ENCODE measurements at regions of chr13 and their contacts with region 1.

Region 1: DNA sequence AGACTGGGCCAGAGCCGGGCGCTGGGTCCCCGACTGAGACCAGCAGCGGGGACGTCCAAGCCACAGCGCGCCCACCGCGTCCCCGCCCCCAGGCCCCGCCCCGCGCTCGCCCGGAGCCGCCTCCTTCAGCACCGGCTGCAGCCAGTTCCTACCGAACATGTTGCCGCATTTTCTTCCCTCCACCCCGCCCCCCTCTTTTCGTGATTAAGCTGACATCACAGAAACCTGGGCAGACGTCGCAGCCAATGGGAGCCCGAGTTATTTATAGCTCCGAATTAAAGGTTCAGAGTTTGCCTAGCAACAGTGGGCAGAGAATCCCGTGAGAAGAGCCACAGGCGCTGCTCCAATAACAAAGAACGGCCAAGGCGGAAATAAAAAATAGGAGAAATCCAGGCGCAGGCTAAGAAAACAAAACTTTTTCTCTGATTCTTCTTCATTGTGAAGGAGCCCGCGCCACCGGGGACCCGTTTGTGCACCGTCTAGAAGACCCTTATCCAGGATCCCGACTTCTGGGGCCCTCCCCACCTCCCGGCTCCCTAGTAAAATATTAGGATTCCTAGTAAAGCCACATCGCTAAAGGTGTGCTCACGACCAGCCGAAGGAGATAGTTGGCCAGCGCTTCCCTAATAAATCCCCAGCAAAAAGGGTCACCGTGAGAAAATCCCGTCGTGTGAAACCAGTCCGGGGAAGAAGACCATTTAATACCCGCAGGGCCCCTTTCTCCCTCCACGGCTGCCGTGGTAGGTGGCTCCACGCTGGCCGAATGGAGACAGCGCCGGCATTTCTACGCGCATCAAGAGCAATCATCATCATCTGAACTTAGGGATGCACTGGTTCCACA is 61.7 kb downstream of the SERP2 start:
- DNase-seq: peak; percentile 94
- ATAC-seq: peak; percentile 69

Region 2: DNA sequence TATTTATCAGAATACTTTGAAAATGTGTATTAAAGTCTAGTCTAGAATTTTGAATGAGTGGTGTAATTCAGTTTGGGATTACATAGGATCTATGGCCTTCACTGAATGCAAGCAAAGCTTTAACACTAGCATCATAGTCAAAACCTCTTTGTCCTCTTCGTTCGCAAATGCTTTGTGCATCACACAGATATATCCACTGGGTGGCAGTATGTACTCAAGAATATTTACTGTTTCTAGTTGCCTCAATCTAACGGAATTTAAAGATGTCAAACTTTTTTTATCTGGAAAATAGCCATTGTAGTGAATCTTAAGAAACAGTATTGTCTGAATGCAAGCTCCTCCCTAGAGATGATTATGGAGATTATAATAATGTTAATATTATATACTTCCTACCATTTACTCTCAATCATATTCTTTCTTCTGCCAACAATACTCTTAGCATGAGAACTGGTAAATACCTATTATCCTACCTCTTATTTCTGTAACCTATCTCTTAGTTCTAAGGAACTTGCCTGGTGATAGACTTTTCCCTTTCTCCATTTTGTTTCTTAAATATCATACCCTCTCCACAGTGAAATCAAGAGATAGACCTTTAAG is 529.8 kb before region 1 on chr13:
- intact Hi-C with region 1: loop called (anchors 2 kb)
- DNase-seq: no peak
- ATAC-seq: peak; percentile 74

Region 3: GRCh38 chr13:44050450-44051063 is 384.8 kb before region 1 on chr13:
- intact Hi-C with region 1: loop called (anchors 5 kb)
- DNase-seq: no peak
- ATAC-seq: peak; percentile 41

Region 4: DNA sequence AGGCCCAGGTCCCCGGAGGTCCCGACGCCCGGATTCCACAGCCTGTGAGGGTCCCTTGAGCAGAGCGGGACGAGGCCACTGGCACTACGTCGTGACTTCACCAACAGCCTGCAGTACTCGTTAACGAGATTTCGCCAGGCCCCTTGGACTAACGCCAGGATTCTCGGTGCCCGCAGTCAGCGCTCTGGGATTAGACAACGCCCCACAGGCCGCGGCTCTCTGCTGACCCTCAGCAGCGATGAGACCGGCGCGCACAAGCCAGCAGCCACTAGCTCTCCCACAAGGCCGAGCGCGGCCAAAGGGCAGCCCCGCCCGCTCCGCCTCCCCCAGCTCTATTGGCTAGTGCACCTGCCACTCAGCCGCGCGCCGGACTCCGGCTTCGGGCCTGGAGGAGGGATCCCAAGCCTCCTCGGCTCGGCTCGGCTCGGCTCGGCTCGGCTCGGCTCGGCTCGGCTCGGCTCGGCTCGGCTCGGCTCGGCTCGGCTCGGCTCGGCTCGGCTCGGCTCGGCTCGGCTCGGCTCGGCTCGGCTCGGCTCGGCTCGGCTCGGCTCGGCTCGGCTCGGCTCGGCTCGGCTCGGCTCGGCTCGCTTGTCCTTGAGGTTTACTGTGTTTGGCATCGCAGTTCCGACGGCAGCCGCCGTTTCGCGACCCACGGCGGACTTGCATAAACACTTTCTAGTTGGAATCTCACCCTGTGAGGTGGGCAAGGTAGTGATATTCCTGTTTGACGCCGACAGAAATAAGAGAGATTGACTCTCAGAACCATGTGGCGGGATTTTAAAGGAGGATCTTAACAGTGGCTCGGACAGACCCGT is 293.4 kb before region 1 on chr13:
- intact Hi-C with region 1: loop called (anchors 10 kb)
- DNase-seq: peak; percentile 99
- ATAC-seq: peak; percentile 99

Region 5: GRCh38 chr13:44237276-44237767 is 198.0 kb before region 1 on chr13:
- intact Hi-C with region 1: loop called (anchors 5 kb)
- DNase-seq: peak; percentile 66
- ATAC-seq: peak; percentile 97

Region 6: DNA sequence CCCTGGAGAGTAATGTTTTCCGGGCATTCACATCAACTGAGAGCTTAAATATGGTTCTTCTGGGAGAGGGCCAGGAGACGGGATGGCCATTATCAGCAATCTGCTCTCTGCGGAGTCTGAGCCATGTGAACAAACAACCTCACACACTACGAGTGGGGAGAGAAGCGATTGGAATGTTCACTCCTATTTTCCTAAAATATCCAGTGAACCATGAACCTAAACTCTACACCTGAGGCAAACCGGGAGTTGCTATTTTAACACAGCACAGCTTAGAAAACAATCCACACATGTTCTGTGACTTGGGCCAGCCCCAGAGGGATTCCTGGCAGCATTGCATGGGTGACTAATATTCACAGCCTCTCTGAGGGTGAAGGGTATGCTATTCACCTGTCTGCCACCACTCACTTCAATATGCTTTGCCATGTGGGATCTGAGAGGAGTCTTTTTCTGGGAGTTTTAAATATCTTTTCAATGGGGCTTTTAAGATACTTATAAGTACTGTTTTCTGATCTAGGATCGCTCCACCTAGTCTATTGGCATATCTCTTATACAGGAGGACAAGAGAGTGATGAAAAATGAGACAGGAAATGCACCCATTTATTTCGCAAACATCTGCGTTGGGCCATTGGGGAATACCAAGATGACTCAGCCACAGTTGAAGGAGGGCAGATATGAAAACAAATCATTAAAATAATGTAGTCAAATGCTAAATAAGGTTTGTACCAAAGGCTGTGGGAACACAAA is 134.3 kb before region 1 on chr13:
- intact Hi-C with region 1: loop called (anchors 5 kb)
- DNase-seq: no peak
- ATAC-seq: peak; percentile 82

Region 7: GRCh38 chr13:44734201-44734707 is 298.9 kb after region 1 on chr13:
- intact Hi-C with region 1: no loop called
- DNase-seq: peak; percentile 59
- ATAC-seq: peak; percentile 77